ENCODE measurements at regions of chr15 and their contacts with region 1.

Region 1: DNA sequence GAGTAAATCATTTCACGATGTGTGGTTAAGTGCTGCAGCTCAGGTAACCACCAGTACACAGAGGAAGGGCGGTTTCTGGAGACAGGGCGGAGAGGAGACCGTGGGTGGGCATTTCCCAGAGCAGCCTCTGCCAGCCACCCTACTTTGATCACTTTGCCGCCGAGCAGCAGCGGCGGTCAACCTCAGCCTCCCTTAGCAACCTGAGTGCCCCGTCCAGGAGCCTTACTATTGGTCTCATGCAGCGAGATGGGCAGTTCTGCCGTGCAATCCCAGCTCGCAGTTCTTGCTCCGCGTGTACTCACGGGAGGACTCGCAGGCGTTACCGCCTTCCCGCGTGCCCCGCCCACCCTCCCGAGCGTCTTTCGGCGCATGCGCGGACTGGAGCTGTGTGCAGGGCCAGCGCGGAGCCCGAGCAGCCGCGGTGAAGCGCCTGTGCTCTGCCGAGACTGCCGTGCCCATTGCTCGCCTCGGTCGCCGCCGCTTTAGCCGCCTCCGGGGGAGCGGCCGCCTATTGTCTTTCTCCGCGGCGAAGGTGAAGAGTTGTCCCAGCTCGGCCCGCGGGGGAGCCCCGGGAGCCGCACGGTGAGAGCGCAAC is at the start of gene AKAP13:
- DNase-seq: peak; percentile 80 to 98 (median 93)
- ATAC-seq: peak; percentile 80 to 86 (median 82)
- H3K4me3 ChIP-seq: peak within 1 kb of the TSS; percentile 70 to 78
- H3K4me3 Mint-ChIP-seq: peak within 1 kb of the TSS; percentile 83 to 91 (median 88)
- H3K27ac ChIP-seq: peak within 1 kb of the TSS; percentile 69
- H3K27ac Mint-ChIP-seq: peak within 1 kb of the TSS; percentile 91 to 92
- H3K4me1 ChIP-seq: peaks cover 15 to 26% of the 10 kb centered on the region in 2 experiments
- H3K4me1 Mint-ChIP-seq: peaks cover 55 to 61% (median 55%) of the 10 kb centered on the region in 3 donors
- H3K27me3 ChIP-seq: no peaks in the 10 kb centered on the region
- H3K27me3 Mint-ChIP-seq: no peaks in the 10 kb centered on the region
- total RNA-seq, gene AKAP13: 232 to 391 (median 281) TPM

Region 2: DNA sequence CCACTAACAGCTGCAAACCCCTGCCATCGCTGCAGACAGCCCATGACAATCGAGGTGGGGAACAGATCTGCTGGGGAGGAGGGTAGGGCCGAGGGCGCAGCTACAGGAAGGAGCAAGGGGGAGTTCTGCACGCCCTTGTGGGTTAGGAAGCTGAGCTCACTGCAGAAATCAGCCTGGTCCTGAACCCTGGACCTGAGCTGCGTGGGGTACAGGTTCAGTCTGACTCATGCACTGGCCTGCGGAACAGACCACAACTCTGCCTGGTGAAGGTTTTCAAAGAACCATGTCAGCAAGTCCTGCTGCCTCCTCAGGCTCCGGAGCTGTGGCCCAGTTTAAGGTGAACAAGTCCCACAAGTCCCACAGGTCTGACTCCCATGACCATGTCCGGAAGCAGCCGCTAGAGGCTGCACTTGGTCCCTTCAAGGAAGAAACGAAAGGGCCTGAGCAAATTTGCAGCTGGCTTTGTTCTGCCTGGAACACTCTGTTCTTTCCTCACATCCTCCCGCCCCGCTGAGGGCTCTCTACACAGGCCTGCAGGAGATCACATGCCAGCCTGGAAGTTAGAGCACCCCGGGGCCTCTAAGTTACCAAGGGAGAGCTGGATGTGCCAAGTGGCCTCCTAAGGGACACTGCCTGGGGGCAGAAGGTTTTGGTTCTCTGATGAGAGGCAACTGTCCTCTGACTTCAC is 49.3 kb before region 1 on chr15:
- CTCF ChIA-PET with region 1: interaction called, 3 to 10 read pairs
- POLR2A ChIA-PET with region 1: interaction called, 4 to 15 read pairs
- DNase-seq: peak; percentile 28 to 79 (median 50)
- ATAC-seq: peak; percentile 67 to 84 (median 78)
- H3K4me3 ChIP-seq: peak overlapping the region; percentile 58 to 67
- H3K4me3 Mint-ChIP-seq: peak overlapping the region; percentile 84 to 94 (median 90)
- H3K27ac ChIP-seq: peak overlapping the region; percentile 88
- H3K27ac Mint-ChIP-seq: peak overlapping the region; percentile 97 to 98
- H3K4me1 ChIP-seq: peaks cover 15 to 29% of the 10 kb centered on the region in 2 experiments
- H3K4me1 Mint-ChIP-seq: peaks cover 49 to 60% (median 52%) of the 10 kb centered on the region in 3 donors
- H3K27me3 ChIP-seq: no peaks in the 10 kb centered on the region
- H3K27me3 Mint-ChIP-seq: no peaks in the 10 kb centered on the region

Region 3: GRCh38 chr15:85412956-85413854 is 32.9 kb after region 1 on chr15:
- CTCF ChIA-PET with region 1: interaction called, 10 to 35 read pairs
- POLR2A ChIA-PET with region 1: interaction called, 3 to 22 read pairs
- DNase-seq: peak; percentile 30 to 80 (median 56)
- ATAC-seq: peak; percentile 97 to 100 (median 100)
- H3K4me3 ChIP-seq: no peak overlapping the region
- H3K4me3 Mint-ChIP-seq: peak overlapping the region; percentile 10 to 60 (median 28)
- H3K27ac ChIP-seq: peak overlapping the region; percentile 71
- H3K27ac Mint-ChIP-seq: peak overlapping the region; percentile 89 to 92
- H3K4me1 ChIP-seq: peaks cover 9 to 13% of the 10 kb centered on the region in 2 experiments
- H3K4me1 Mint-ChIP-seq: peaks cover 64 to 76% (median 74%) of the 10 kb centered on the region in 3 donors
- H3K27me3 ChIP-seq: no peaks in the 10 kb centered on the region
- H3K27me3 Mint-ChIP-seq: no peaks in the 10 kb centered on the region

Region 4: GRCh38 chr15:85424154-85424553 is 43.8 kb after region 1 on chr15:
- CTCF ChIA-PET with region 1: no interaction called
- POLR2A ChIA-PET with region 1: interaction called in 1 of 2 experiments, 10 read pairs
- DNase-seq: no peak
- ATAC-seq: peak in 1 of 4 experiments; percentile 88
- H3K4me3 ChIP-seq: no peak overlapping the region
- H3K4me3 Mint-ChIP-seq: no peak overlapping the region
- H3K27ac ChIP-seq: no peak overlapping the region
- H3K27ac Mint-ChIP-seq: peak overlapping the region in 1 of 2 donors; percentile 70
- H3K4me1 ChIP-seq: peaks cover 6 to 33% of the 10 kb centered on the region in 2 experiments
- H3K4me1 Mint-ChIP-seq: peaks cover 88 to 92% (median 89%) of the 10 kb centered on the region in 3 donors
- H3K27me3 ChIP-seq: no peaks in the 10 kb centered on the region
- H3K27me3 Mint-ChIP-seq: no peaks in the 10 kb centered on the region

Region 5: DNA sequence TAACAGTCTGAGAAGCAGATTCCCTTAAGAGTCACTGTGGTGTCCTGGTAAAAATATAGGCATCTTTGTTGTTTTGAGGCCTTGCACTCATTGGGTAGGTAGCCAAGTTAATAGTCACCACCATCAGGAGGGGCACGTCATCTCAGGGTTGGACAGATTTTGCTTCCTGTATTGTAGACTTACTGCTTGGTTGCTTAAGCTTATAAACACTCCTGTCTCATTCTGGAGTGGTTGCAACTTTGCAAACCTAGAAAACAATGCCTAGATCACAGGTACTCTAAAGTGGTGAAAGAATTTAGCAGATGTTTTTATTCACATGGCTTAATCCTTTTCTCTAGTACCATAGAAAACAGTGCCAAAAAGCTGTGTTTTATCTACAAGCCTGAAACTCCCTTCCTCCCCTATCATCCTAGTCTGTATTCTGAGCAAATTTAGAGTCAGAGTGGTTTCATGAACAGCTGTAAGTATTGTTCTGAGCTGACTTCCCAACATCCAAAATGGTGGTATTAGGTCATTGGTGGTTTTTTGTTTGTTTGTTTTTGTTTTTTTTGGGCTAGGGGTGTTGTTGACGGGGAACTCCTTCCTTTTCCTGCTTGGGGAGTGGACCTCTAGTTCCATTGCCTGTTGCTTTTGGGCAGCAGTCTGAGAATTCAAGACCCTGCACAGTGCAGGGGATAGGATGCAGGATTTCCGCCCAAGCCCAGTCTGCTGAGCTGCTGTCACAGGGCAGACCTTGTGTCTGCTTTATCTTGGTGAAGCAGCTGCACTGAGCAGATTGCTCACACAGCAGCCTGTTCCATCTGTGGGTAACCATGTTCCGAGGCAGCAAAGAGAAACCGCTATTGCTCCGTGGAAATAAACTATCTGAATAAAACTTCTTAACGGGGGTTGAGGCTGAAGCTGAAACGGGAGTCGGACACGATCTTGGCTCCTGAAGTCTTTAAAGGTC is 202.1 kb after region 1 on chr15:
- CTCF ChIA-PET with region 1: no interaction called
- POLR2A ChIA-PET with region 1: interaction called in 1 of 2 experiments, 10 read pairs
- DNase-seq: peak; percentile 32 to 79 (median 64)
- ATAC-seq: peak; percentile 87 to 92 (median 90)
- H3K4me3 ChIP-seq: peak overlapping the region; percentile 55 to 58
- H3K4me3 Mint-ChIP-seq: peak overlapping the region; percentile 82 to 88 (median 82)
- H3K27ac ChIP-seq: peak overlapping the region; percentile 93
- H3K27ac Mint-ChIP-seq: peak overlapping the region; percentile 96 to 99
- H3K4me1 ChIP-seq: peaks cover 39 to 45% of the 10 kb centered on the region in 2 experiments
- H3K4me1 Mint-ChIP-seq: peaks cover 76 to 82% (median 77%) of the 10 kb centered on the region in 3 donors
- H3K27me3 ChIP-seq: no peaks in the 10 kb centered on the region
- H3K27me3 Mint-ChIP-seq: no peaks in the 10 kb centered on the region

Region 6: GRCh38 chr15:85614059-85614458 is 233.7 kb after region 1 on chr15:
- CTCF ChIA-PET with region 1: no interaction called
- POLR2A ChIA-PET with region 1: interaction called in 1 of 2 experiments, 12 read pairs
- DNase-seq: no peak
- ATAC-seq: no peak
- H3K4me3 ChIP-seq: no peak overlapping the region
- H3K4me3 Mint-ChIP-seq: no peak overlapping the region
- H3K27ac ChIP-seq: no peak overlapping the region
- H3K27ac Mint-ChIP-seq: peak overlapping the region; percentile 37 to 68
- H3K4me1 ChIP-seq: peaks cover 0 to 3% of the 10 kb centered on the region in 2 experiments
- H3K4me1 Mint-ChIP-seq: peaks cover 14 to 22% (median 21%) of the 10 kb centered on the region in 3 donors
- H3K27me3 ChIP-seq: no peaks in the 10 kb centered on the region
- H3K27me3 Mint-ChIP-seq: no peaks in the 10 kb centered on the region

Measured in T-cell (primary cell).